ENCODE measurements at regions of chr1 and their contacts with region 1.

Region 1: DNA sequence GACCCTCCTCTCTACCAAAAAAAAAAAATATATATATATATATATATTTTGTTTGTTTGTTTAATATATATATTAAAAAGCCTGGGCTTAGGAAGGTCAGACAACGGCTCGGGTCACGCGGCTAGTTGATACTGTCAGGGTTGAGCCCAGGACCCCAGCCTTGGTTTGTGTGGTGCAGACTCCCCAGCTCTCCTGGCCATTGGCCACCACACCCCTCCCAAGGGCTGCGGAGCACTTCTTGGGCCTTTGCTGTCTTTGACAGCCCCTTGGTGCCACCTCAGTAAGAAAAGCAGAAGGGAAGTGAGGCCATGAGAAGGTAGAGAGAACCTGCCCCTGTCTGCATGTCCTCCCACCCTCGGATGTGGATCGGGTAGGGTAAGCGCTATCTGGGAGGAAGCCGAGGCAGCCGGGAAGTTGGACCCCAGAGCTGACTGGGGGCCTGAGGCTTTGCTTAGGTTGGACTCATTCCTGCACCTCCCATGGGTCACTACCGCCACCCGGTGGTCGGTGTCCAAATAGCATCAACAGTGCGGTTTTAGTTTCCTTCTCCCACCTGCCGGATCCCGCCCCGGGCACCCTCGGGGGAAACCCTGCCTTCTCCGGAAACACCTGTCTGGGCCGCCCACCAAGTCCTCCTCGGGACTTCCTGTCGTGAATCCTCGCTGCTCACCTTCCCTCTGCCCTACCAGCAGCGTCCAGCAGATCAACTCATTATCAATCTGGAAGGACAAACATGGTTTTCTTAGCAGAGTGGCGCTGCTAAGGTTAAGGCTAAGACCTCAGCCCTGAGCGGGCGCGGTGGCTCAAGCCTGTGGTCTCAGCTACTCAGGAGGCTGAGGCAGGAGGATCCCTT is 29.8 kb upstream of the GNPAT start:
- DNase-seq: peak; percentile 93
- H3K4me3 ChIP-seq: peak overlapping the region; percentile 54
- H3K27ac ChIP-seq: peak overlapping the region; percentile 31
- H3K4me1 ChIP-seq: peaks cover 32% of the 10 kb centered on the region
- CTCF ChIP-seq: peak; percentile 89

Region 2: DNA sequence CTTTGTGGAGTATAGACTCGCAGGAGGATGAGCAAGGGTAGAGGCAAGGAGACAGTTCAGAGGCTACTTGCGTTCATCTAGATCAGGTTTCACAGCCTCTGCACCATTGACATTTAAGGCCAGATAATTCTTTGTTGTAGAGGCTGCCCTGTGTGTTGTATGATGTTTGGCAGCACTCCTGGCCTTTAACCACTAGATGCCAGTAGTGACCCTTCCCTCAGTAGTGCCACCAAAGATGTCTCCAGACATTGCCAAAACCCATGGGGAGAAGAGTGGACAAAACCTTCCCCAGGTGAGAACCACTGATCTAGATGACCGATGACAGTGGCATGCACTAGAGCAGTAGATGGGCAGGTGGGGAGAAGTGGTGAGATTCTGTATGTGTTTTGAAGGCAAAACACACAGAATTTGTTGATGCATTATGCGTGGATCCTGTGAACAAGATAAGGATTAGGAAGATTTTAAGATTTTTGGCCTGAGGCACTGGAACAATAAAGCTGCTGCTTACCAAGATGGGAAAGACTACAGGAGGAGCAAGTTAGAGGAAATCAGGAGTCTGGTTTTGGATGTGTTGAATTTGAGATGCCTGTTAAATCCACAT is 578.9 kb before region 1 on chr1:
- CTCF ChIA-PET with region 1: no interaction called
- POLR2A ChIA-PET with region 1: no interaction called
- intact Hi-C with region 1: loop called (anchors 1 kb)
- DNase-seq: peak; percentile 51
- H3K4me3 ChIP-seq: no peak overlapping the region
- H3K27ac ChIP-seq: no peak overlapping the region
- H3K4me1 ChIP-seq: no peaks in the 10 kb centered on the region
- CTCF ChIP-seq: peak; percentile 79

Region 3: DNA sequence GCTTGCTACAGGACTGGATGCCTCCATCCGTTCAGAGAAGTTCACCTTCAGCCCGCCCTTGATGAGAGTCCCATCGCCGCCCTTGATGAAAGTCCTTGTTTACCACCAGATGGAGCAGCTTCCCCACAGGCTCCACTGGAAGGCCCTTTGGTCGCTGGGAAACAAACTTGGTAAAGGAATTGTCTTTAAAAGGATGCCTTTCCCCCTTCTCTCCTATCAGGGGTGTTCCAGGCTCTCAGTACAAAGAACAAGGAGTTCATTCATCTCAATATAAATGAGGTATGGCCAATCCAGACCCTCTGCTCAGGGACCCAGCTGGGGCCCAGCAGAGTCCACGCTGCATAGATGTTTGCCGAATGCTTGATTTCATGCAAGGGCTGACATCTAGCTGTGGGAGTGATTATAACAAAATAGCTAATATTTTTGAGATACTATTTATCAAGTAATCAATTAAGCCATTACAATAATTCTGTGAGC is 413.3 kb before region 1 on chr1:
- CTCF ChIA-PET with region 1: no interaction called
- POLR2A ChIA-PET with region 1: no interaction called
- intact Hi-C with region 1: loop called (anchors 1 kb)
- DNase-seq: peak; percentile 5
- H3K4me3 ChIP-seq: no peak overlapping the region
- H3K27ac ChIP-seq: no peak overlapping the region
- H3K4me1 ChIP-seq: no peaks in the 10 kb centered on the region
- CTCF ChIP-seq: peak; percentile 54

Region 4: DNA sequence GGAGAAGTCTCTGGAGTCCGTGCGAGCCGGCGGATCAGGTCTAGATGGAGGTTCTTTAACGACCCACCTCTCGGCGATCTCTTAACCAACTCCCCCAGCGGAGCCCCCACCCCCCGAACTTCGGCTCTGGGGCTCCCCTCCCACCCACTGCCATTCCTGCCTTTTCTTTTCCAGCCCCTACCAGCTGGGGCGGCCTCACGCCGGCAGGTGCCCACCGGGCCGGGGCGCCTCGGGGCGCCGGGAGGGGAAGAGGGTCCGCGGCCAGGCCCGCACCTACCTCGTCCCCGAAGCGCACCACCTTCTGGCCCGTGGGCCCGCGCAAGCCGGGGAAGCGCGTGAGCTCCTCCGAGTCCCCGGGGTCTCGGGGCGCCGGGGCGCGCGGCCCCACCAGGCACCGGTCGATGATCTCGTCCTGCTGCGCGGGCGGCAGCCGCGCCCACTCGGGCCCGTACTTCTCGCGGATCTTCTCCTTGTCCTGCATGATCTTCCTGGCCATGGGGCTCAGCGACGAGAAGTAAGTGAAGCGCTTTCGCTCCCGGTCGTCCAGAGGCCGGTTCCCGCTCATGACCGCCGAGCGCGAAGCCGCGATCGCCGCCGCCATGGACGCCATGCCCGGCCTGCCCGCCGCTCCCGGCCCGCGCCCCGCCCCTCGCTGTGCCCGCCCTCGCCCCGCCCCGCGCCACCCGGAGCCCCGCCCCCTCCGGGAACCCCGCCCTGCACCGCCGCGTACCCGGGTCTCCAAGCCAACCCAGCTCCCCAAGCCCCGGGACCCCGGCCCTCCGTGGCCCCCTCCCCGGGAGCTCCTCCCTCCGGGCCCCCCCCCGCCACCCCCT is 343.1 kb before region 1 on chr1 and contains the start of gene C1orf198:
- CTCF ChIA-PET with region 1: no interaction called
- POLR2A ChIA-PET with region 1: no interaction called
- intact Hi-C with region 1: loop called (anchors 2 kb)
- DNase-seq: peak; percentile 59
- H3K4me3 ChIP-seq: peak within 1 kb of the TSS; percentile 84
- H3K27ac ChIP-seq: no peak within 1 kb of the TSS
- H3K4me1 ChIP-seq: peaks cover 16% of the 10 kb centered on the region
- CTCF ChIP-seq: 0 out of 2 replicates have a peak, but pooled peaks have one; percentile 25
- total RNA-seq, gene C1orf198: 4.9 and 5.7 TPM in 2 replicates

Measured in OCI-LY7 (cell line).